ENCODE measurements at regions of chr10 and their contacts with region 1.

Region 1: DNA sequence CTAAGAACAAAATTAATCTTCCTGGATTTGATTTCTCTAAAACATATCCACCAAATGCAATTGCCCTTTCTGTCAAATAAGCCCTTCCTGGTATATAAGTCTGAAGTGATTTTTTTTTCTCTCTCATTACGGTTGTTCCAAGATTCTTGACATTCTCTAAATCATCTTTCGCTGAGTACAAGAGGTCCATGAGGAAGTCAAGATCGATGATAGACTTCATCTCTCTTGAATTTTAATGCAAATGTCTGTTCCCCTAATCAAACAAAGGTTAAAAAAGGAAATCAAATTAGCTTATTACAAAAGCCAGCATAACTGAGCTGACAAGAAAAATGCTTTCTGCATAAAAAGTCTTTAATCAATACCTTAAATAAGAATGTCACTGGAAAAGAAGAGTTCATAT is 77.4 kb upstream of the ITGB1 start:
- DNase-seq: no peak
- ATAC-seq: no peak
- H3K4me3 ChIP-seq: no peak overlapping the region
- H3K4me3 Mint-ChIP-seq: no peak overlapping the region
- H3K27ac ChIP-seq: no peak overlapping the region
- H3K27ac Mint-ChIP-seq: no peak overlapping the region
- H3K4me1 ChIP-seq: peaks cover 0 to 7% of the 10 kb centered on the region in 2 experiments
- H3K4me1 Mint-ChIP-seq: peaks cover 0 to 24% (median 7%) of the 10 kb centered on the region in 3 donors
- H3K27me3 ChIP-seq: peaks cover 0 to 6% of the 10 kb centered on the region in 2 experiments
- H3K27me3 Mint-ChIP-seq: no peaks in the 10 kb centered on the region

Region 2: GRCh38 chr10:32005050-32005449 is 1030.4 kb before region 1 on chr10:
- CTCF ChIA-PET with region 1: interaction called in 1 of 2 experiments, 10 read pairs
- POLR2A ChIA-PET with region 1: no interaction called
- DNase-seq: peak in 31 of 35 experiments; percentile 5 to 68 (median 37)
- ATAC-seq: peak; percentile 64 to 77 (median 72)
- H3K4me3 ChIP-seq: no peak overlapping the region
- H3K4me3 Mint-ChIP-seq: no peak overlapping the region
- H3K27ac ChIP-seq: no peak overlapping the region
- H3K27ac Mint-ChIP-seq: no peak overlapping the region
- H3K4me1 ChIP-seq: no peaks in the 10 kb centered on the region
- H3K4me1 Mint-ChIP-seq: peaks cover 7 to 9% (median 7%) of the 10 kb centered on the region in 3 donors
- H3K27me3 ChIP-seq: no peaks in the 10 kb centered on the region
- H3K27me3 Mint-ChIP-seq: no peaks in the 10 kb centered on the region

Measured in T-cell (primary cell).